MCF 10A (cell line): ENCODE measurements at regions of chr9 and their contacts with region 1.

Region 1: DNA sequence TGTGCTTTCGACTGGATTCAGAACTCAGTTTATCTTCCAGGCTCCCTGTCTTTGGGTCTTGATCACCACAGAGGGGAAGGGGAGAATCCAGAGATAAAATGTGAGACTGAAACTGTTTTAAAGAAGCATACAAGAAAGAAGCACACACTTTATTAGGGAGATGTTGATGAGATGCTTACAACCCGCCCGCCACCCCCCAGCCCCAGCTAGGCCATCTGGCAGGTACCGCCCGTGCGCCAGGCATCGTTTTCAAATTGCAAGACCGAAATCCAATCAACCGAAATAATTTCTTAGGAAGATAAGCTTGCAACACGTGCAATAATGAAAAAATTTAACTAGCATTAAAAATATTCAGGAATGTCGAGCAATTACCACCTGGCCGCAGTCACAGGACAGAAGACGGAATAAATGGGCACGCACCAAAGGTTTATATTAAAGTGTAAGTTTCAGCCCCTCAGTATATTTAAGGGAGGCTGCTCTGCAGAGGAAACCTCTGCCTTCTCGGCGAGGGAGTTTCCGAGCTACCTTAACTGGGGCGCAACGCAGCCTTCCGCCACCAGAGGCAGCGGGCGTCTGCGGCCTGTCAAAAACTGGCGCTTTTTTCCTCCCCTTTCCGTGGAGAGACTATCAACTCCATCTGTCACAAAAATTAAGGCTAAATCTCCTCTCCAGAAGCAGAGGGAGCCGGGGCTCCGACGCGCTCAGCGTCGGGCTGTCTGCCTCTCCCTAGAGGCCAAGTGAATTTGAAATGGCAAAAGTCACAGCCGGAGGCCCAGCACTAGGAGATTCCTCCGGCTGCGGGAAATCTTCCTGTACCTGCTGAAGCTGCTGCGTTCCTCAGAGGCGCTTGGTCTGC is 996 bp upstream of the GAS1 start:
- DNase-seq: peak; percentile 85
- H3K4me3 Mint-ChIP-seq: peak overlapping the region; percentile 98
- H3K27ac Mint-ChIP-seq: peak overlapping the region; percentile 91
- H3K4me1 Mint-ChIP-seq: peaks cover 6% of the 10 kb centered on the region
- H3K27me3 Mint-ChIP-seq: no peaks in the 10 kb centered on the region
- CTCF ChIP-seq: peak; percentile 77

Region 2: DNA sequence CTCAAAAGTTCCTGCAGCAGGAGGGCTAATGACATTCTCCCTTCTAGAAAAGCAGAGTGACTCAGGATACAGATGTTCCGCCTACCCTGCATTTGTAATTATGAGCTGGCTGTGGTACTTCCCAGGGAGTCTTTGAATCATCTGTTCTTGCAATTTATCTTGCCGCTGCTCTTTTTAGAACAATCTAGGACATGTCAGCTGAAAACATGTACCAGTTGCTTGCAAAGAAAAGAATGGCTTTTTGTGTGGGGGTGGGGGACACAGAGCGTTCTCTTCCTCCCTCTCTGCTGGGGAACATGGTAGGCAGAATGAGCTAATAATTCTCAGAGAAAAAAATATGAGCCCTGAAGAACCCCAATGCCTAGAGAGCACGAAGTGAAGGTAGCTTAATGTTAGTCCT is 542.4 kb before region 1 on chr9:
- CTCF ChIA-PET with region 1: interaction called, 3 read pairs
- POLR2A ChIA-PET with region 1: interaction called, 13 read pairs
- intact Hi-C with region 1: no loop called
- DNase-seq: peak; percentile 86
- H3K4me3 Mint-ChIP-seq: peak overlapping the region; percentile 60
- H3K27ac Mint-ChIP-seq: peak overlapping the region; percentile 95
- H3K4me1 Mint-ChIP-seq: peaks cover 49% of the 10 kb centered on the region
- H3K27me3 Mint-ChIP-seq: no peaks in the 10 kb centered on the region
- CTCF ChIP-seq: no peak

Region 3: DNA sequence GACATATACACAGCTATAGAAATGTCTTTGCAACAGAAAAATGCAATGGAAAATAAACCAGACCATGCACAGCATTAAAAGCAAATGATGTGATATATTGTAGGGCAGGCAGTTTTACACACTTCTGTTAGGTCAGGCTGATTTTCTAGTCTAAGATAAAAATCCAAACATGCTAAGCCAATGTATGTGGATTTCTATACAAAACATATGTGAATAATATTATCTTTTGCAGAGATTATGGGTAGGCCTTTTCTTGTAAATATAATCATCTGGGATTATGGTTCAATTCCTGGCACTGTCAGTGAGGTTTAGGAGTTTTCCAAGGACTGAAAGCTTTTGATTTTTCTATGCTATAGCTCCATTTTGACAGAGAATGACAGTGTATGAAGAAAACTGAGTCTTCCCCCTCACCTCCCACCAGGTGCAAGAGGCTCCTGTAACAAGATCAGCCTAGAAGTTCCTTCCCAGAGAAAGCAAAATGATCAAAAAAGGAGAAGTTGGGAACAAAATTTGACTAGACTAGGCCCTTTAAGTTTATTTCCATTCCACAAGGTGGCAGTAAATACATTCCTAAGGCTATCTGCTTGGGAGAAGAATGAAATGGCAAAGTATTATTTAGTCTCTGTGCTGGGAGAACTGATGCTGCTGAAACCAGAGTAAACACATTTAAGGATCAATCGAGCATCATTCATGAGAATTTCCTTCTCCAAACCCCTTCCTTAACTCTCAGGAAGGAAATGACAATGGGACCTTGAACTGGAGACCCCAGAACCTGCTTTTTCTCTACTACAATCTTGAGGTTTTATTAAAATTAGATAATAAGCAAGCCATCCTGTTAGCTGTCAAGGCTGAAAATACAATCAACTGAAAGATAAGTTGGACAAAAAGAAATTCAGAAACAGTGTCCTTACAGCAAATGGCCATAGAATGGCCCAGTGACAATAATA is 461.1 kb before region 1 on chr9:
- CTCF ChIA-PET with region 1: interaction called, 30 read pairs
- POLR2A ChIA-PET with region 1: interaction called, 39 read pairs
- intact Hi-C with region 1: loop called (anchors 1 kb)
- DNase-seq: peak; percentile 64
- H3K4me3 Mint-ChIP-seq: no peak overlapping the region
- H3K27ac Mint-ChIP-seq: no peak overlapping the region
- H3K4me1 Mint-ChIP-seq: peaks cover 6% of the 10 kb centered on the region
- H3K27me3 Mint-ChIP-seq: no peaks in the 10 kb centered on the region
- CTCF ChIP-seq: peak; percentile 76

Region 4: GRCh38 chr9:86732514-86733171 is 215.7 kb before region 1 on chr9:
- CTCF ChIA-PET with region 1: no interaction called
- POLR2A ChIA-PET with region 1: interaction called, 14 read pairs
- intact Hi-C with region 1: no loop called
- DNase-seq: peak; percentile 95
- H3K4me3 Mint-ChIP-seq: no peak overlapping the region
- H3K27ac Mint-ChIP-seq: peak overlapping the region; percentile 43
- H3K4me1 Mint-ChIP-seq: peaks cover 45% of the 10 kb centered on the region
- H3K27me3 Mint-ChIP-seq: no peaks in the 10 kb centered on the region
- CTCF ChIP-seq: no peak

Region 5: DNA sequence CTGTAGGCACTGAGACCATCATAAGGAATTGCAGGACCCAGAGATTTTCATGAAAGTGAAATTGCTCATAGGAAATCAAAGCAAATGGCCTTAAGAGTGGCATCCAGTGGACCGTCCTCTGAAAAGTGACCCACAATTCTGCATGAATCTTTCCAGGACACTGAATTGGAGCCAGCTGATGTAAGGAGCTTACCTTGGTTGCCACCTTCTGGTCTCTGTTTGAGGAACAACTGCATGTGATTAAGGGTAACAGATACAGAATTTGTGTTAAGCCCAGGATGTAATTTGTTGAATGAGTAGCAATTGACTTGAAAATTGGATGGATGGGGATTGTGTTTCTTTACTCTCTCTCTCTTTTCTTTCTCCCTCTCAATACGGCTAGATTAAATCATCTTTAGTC is 48.9 kb after region 1 on chr9:
- CTCF ChIA-PET with region 1: interaction called, 8 read pairs
- POLR2A ChIA-PET with region 1: interaction called, 13 read pairs
- intact Hi-C with region 1: loop called (anchors 1 kb)
- DNase-seq: peak; percentile 52
- H3K4me3 Mint-ChIP-seq: no peak overlapping the region
- H3K27ac Mint-ChIP-seq: no peak overlapping the region
- H3K4me1 Mint-ChIP-seq: peaks cover 10% of the 10 kb centered on the region
- H3K27me3 Mint-ChIP-seq: no peaks in the 10 kb centered on the region
- CTCF ChIP-seq: peak; percentile 41

Region 6: GRCh38 chr9:87099407-87099806 is 151.1 kb after region 1 on chr9:
- CTCF ChIA-PET with region 1: no interaction called
- POLR2A ChIA-PET with region 1: interaction called, 10 read pairs
- intact Hi-C with region 1: no loop called
- DNase-seq: peak; percentile 60
- H3K4me3 Mint-ChIP-seq: no peak overlapping the region
- H3K27ac Mint-ChIP-seq: no peak overlapping the region
- H3K4me1 Mint-ChIP-seq: peaks cover 12% of the 10 kb centered on the region
- H3K27me3 Mint-ChIP-seq: no peaks in the 10 kb centered on the region
- CTCF ChIP-seq: no peak

Region 7: DNA sequence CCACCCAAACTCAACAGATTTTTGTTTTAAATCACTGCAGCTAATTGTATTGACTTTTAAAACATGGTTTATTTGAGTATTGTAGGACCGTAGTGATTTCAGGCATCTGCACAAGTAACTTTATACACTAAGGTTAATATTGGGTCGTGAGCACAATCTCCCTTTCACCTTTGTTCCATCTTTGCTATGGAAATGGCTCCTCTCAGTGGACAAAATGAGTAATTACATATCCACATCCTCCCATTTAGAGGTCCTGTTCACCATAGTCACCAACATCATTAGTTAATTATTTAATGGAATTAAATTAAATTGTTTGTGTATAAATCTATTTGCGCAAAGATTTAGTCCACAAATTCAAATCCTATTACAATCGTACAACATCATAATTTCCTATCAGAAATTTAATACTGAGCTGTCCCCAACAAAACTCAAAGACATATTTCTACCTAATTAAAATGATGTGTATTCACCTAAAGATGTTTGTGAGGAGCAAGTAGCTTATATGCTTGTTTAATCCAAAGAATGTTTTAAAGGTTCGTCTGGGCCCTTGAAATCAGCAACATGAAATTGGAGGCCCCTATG is 376.4 kb after region 1 on chr9:
- CTCF ChIA-PET with region 1: interaction called, 17 read pairs
- POLR2A ChIA-PET with region 1: interaction called, 70 read pairs
- intact Hi-C with region 1: loop called (anchors 1 kb)
- DNase-seq: peak; percentile 75
- H3K4me3 Mint-ChIP-seq: no peak overlapping the region
- H3K27ac Mint-ChIP-seq: no peak overlapping the region
- H3K4me1 Mint-ChIP-seq: peaks cover 17% of the 10 kb centered on the region
- H3K27me3 Mint-ChIP-seq: no peaks in the 10 kb centered on the region
- CTCF ChIP-seq: peak; percentile 52

Region 8: GRCh38 chr9:87445646-87446045 is 497.3 kb after region 1 on chr9:
- CTCF ChIA-PET with region 1: no interaction called
- POLR2A ChIA-PET with region 1: no interaction called
- intact Hi-C with region 1: no loop called
- DNase-seq: peak; percentile 28
- H3K4me3 Mint-ChIP-seq: no peak overlapping the region
- H3K27ac Mint-ChIP-seq: peak overlapping the region; percentile 39
- H3K4me1 Mint-ChIP-seq: peaks cover 9% of the 10 kb centered on the region
- H3K27me3 Mint-ChIP-seq: no peaks in the 10 kb centered on the region
- CTCF ChIP-seq: no peak